T-cell (primary cell): ENCODE measurements at regions of chr18 and their contacts with region 1.

Region 1: DNA sequence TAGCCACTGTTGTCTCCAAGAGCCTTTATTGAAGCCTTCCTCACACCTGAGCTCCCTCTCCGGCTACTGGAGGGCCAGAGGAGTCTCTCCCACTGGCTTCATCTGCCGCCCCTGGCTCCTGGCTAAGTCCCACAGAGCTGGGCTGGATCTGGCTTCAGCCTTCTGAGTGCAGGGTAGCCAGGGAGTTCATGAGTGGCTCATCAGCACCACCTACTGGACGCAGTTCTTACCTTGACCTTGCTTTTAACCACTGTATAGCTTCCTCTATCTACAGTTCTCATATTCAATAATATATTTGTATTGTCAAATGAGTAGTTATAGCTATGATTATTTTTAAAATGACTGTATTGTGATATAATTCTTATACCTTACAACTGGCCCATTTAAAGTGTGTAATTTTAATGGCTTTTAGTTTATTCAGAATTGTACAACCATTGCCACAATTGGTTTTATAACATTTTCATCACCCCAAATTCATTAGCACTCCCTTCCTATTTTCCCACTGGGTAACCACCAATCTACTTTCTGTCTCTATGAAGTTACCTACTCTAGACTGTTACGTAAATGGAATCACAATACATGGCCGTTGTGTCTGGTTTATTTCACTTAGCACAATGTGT is 17.7 kb downstream of the CNDP1 start:
- DNase-seq: peak; percentile 40 to 89 (median 66)
- ATAC-seq: peak; percentile 88 to 95 (median 92)
- H3K4me3 ChIP-seq: no peak overlapping the region
- H3K4me3 Mint-ChIP-seq: no peak overlapping the region
- H3K27ac ChIP-seq: no peak overlapping the region
- H3K27ac Mint-ChIP-seq: no peak overlapping the region
- H3K4me1 ChIP-seq: no peaks in the 10 kb centered on the region
- H3K4me1 Mint-ChIP-seq: no peaks in the 10 kb centered on the region
- H3K27me3 ChIP-seq: peaks cover 0 to 17% of the 10 kb centered on the region in 2 experiments
- H3K27me3 Mint-ChIP-seq: peaks cover 15 to 16% of the 10 kb centered on the region in 2 donors

Region 2: GRCh38 chr18:72830109-72830508 is 1721.9 kb before region 1 on chr18:
- CTCF ChIA-PET with region 1: no interaction called
- POLR2A ChIA-PET with region 1: interaction called in 1 of 2 experiments, 11 read pairs
- DNase-seq: no peak
- ATAC-seq: no peak
- H3K4me3 ChIP-seq: no peak overlapping the region
- H3K4me3 Mint-ChIP-seq: no peak overlapping the region
- H3K27ac ChIP-seq: no peak overlapping the region
- H3K27ac Mint-ChIP-seq: no peak overlapping the region
- H3K4me1 ChIP-seq: no peaks in the 10 kb centered on the region
- H3K4me1 Mint-ChIP-seq: no peaks in the 10 kb centered on the region
- H3K27me3 ChIP-seq: no peaks in the 10 kb centered on the region
- H3K27me3 Mint-ChIP-seq: no peaks in the 10 kb centered on the region

Region 3: DNA sequence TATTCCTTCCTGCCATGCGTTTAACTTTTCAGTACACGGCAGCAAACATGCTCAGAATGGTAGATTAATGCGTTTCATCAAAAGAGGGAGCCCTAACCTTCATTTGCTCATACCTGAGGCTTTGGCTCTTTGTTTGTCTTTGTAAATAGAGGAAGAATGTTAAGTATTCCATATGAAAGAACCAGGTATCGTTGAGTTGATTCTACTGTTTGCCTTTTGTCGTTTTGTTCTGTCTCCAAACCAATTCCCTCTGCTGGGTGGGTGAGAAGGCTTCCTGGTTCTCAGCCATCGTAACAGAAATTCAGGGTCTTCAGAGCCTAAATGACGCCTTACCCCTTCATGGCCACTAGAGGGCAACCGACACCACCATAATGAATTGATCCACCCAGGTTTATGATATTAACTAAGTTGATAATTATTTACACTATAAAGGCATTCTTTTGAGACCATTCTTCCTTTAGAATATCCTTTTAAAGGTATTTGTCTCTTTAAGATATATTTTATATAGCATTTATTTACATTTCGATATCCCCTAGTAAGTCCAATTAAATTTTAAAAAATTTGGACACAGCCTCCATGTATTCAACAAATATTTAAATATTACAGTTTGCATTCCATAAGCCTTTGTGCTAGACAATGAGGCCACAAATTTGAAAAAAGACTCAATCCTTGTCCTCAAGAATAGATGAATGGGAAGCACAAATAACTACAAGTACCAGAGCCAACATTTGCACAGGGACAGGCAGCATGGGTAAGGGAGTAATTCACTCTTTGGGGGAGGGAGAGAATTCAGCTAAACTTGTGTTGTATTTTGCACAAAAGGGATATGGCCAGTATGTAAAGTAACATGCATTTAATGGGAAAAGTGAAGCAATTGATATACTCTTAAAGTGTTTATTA is 355.6 kb before region 1 on chr18:
- CTCF ChIA-PET with region 1: interaction called, 11 to 22 read pairs
- POLR2A ChIA-PET with region 1: no interaction called
- DNase-seq: peak; percentile 13 to 85 (median 40)
- ATAC-seq: peak; percentile 87 to 95 (median 90)
- H3K4me3 ChIP-seq: peak overlapping the region; percentile 31 to 42
- H3K4me3 Mint-ChIP-seq: peak overlapping the region; percentile 60 to 75 (median 67)
- H3K27ac ChIP-seq: peak overlapping the region; percentile 31
- H3K27ac Mint-ChIP-seq: peak overlapping the region; percentile 63 to 82
- H3K4me1 ChIP-seq: no peaks in the 10 kb centered on the region
- H3K4me1 Mint-ChIP-seq: peaks cover 0 to 4% (median 3%) of the 10 kb centered on the region in 3 donors
- H3K27me3 ChIP-seq: peaks cover 0 to 19% of the 10 kb centered on the region in 2 experiments
- H3K27me3 Mint-ChIP-seq: peaks cover 6 to 8% of the 10 kb centered on the region in 2 donors

Region 4: GRCh38 chr18:74342416-74343043 is 209.5 kb before region 1 on chr18:
- CTCF ChIA-PET with region 1: interaction called in 1 of 2 experiments, 10 read pairs
- POLR2A ChIA-PET with region 1: no interaction called
- DNase-seq: peak in 16 of 35 experiments; percentile 8 to 71 (median 19)
- ATAC-seq: peak in 1 of 4 experiments; percentile 48
- H3K4me3 ChIP-seq: no peak overlapping the region
- H3K4me3 Mint-ChIP-seq: no peak overlapping the region
- H3K27ac ChIP-seq: no peak overlapping the region
- H3K27ac Mint-ChIP-seq: no peak overlapping the region
- H3K4me1 ChIP-seq: no peaks in the 10 kb centered on the region
- H3K4me1 Mint-ChIP-seq: peaks cover 0 to 2% (median 0%) of the 10 kb centered on the region in 3 donors
- H3K27me3 ChIP-seq: peaks cover 0 to 4% of the 10 kb centered on the region in 2 experiments
- H3K27me3 Mint-ChIP-seq: peaks cover 3% of the 10 kb centered on the region in 2 donors

Region 5: GRCh38 chr18:74353169-74353775 is 198.8 kb before region 1 on chr18:
- CTCF ChIA-PET with region 1: interaction called, 19 to 23 read pairs
- POLR2A ChIA-PET with region 1: no interaction called
- DNase-seq: peak in 34 of 35 experiments; percentile 30 to 84 (median 56)
- ATAC-seq: peak; percentile 79 to 89 (median 82)
- H3K4me3 ChIP-seq: no peak overlapping the region
- H3K4me3 Mint-ChIP-seq: no peak overlapping the region
- H3K27ac ChIP-seq: no peak overlapping the region
- H3K27ac Mint-ChIP-seq: no peak overlapping the region
- H3K4me1 ChIP-seq: peaks cover 0 to 3% of the 10 kb centered on the region in 2 experiments
- H3K4me1 Mint-ChIP-seq: peaks cover 13 to 14% (median 14%) of the 10 kb centered on the region in 3 donors
- H3K27me3 ChIP-seq: no peaks in the 10 kb centered on the region
- H3K27me3 Mint-ChIP-seq: no peaks in the 10 kb centered on the region

Region 6: DNA sequence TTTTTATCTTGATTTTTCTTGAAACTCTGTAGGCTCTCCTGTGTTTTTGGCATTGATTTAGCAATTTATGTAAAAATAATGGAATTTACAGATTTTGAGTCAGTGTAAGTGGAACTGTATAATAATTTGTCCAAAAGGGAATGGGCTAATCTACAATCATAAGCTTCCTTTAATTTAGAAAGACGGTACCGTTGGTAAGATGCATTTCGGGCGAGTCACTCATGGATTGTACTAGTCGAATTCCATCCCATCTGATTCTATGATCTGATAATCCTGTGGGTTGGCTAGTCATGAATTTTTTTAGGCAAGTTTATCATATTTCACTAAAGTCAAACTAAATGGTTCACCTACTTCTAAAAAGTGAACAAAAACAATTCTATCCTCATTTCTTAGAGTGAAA is 179.1 kb after region 1 on chr18:
- CTCF ChIA-PET with region 1: no interaction called
- POLR2A ChIA-PET with region 1: no interaction called
- DNase-seq: no peak
- ATAC-seq: no peak
- H3K4me3 ChIP-seq: no peak overlapping the region
- H3K4me3 Mint-ChIP-seq: no peak overlapping the region
- H3K27ac ChIP-seq: no peak overlapping the region
- H3K27ac Mint-ChIP-seq: no peak overlapping the region
- H3K4me1 ChIP-seq: no peaks in the 10 kb centered on the region
- H3K4me1 Mint-ChIP-seq: peaks cover 5 to 32% (median 10%) of the 10 kb centered on the region in 3 donors
- H3K27me3 ChIP-seq: no peaks in the 10 kb centered on the region
- H3K27me3 Mint-ChIP-seq: no peaks in the 10 kb centered on the region